ENCODE measurements at regions of chr6 and their contacts with region 1.

Region 1: GRCh38 chr6:45571159-45571558 is 193.4 kb upstream of the SUPT3H start:
- DNase-seq: no peak
- H3K4me3 ChIP-seq: no peak overlapping the region
- H3K27ac ChIP-seq: no peak overlapping the region
- H3K4me1 ChIP-seq: peaks cover 44% of the 10 kb centered on the region
- H3K27me3 ChIP-seq: no peaks in the 10 kb centered on the region
- CTCF ChIP-seq: no peak

Region 2: DNA sequence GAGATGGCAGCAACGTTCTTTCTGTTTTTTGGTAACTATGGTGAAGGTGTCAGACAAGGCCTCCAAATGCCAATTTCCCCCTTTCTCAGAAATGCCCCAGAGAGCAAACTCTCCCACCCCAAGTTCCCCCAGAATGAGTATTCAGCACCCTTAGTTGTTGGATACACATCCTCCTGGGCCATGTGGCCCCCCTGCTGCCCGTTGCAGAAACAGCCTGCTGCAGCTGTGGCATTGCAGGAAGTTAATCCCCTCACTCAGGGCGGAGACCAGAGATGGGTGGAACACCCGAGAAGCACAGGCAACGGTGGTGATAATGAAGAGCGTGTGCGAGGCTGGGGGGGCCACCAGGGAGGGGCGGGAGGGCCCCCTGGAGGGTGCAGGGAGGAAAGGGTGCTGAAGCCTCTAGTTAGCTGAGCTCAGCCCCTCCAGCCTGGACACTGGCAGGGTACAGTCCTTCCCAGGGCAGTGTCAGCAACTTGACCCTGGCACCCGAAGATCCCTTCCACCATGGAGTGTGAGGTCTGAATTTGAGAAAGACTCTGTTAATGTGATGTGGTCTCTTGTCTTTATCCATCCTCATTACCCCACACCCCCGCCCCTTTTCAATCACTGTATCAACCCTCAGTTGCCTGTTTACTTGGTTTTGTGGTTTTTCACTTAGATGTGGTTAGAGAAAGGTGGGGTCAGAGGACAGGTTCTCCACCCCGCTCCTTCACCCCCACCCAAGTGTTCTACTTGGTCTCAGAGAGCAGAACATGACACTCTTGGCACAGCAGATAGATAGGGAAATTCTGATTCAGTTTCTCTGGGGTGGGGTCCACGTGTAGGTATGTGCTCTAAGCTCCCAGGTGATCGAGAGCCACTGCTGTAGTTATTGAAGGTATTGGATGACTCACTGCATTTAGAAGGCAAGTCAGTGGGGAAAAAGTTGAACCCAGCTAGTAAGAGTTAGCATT is 15.3 kb after region 1 on chr6:
- CTCF ChIA-PET with region 1: interaction called, 10 read pairs
- dilution Hi-C with region 1: no loop called
- in situ Hi-C with region 1: no loop called
- intact Hi-C with region 1: no loop called
- DNase-seq: peak; percentile 85
- H3K4me3 ChIP-seq: no peak overlapping the region
- H3K27ac ChIP-seq: peak overlapping the region; percentile 80
- H3K4me1 ChIP-seq: peaks cover 43% of the 10 kb centered on the region
- H3K27me3 ChIP-seq: no peaks in the 10 kb centered on the region
- CTCF ChIP-seq: no peak

Region 3: DNA sequence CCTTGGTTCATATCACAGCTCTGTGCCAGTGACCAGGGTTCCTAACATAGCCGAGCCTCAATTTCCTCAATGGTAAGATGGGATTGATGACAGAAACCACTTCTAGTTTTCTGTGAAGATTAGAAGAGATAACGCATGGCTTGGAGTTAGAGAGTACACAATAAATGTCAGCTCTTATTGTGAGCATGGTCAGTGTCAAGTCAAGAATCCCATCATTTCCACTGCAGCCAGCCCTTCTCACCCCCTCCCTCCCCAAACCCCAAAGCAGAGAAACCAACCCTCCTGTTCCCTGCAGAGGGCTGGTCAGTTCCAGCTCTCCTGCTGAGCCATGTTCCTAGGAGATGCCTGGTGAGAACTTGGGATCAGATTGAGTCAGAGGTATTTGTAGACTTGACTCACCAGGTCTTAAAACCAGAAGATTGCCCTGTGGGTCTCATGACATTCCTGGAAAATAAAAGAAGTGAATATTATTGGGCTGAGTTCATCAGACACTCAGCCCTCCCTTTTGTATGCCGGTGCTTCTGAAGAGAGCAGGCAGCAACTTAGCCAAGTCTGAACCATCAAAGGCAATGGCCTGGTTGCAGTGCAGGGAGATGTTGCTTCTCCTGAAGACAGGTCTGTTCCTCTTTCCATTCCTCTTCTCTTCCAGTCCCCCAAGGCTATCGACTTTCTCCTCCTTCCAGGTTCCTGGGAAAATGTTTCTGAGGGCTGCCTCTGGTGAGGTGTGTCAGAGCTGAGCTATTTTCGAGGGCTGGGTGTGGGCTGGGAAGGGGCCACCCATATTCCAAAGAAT is 84.7 kb after region 1 on chr6:
- CTCF ChIA-PET with region 1: no interaction called
- dilution Hi-C with region 1: no loop called
- in situ Hi-C with region 1: no loop called
- intact Hi-C with region 1: no loop called
- DNase-seq: peak; percentile 98
- H3K4me3 ChIP-seq: no peak overlapping the region
- H3K27ac ChIP-seq: peak overlapping the region; percentile 76
- H3K4me1 ChIP-seq: peaks cover 53% of the 10 kb centered on the region
- H3K27me3 ChIP-seq: no peaks in the 10 kb centered on the region
- CTCF ChIP-seq: no peak